Cardiac septum (tissue), 1 donor: ENCODE measurements at regions of chr6 and their contacts with region 1.

Region 1: DNA sequence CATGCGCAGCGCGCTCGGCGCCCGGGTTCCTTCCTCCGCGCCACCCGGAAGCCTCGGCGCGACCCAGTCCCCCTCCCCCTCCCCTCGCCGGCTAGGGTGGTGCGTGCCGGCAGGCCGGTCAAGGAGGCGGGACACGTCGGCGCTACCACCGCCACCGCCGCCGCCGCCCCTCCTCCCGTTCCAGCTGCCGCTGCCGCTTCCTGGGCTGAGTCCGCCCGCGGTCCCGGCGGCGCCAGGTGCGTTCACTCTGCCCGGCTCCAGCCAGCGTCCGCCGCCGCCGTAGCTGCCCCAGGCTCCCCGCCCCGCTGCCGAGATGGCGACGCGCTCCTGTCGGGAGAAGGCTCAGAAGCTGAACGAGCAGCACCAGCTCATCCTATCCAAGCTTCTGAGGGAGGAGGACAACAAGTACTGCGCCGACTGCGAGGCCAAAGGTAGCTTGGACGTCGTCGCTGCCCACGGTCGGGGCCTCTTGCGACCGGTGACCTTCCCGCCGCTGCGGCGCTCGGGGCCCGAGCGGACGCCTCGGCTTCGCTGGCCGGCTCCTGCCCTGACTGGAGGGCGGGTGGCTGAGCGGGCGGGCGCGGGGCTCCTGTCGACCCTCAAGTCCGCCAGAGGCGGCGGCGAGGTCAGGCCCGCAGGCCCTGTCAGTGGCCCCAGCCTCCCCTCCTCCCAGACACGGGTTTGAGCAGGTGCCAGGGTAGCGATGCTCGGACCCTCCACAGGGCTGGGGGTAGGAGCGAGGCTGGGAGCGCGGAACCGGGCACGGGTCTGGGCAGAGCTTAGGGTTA is at the start of gene SMAP1:
- DNase-seq: peak; percentile 97
- total RNA-seq, gene SMAP1: 32.5 TPM

Region 2: DNA sequence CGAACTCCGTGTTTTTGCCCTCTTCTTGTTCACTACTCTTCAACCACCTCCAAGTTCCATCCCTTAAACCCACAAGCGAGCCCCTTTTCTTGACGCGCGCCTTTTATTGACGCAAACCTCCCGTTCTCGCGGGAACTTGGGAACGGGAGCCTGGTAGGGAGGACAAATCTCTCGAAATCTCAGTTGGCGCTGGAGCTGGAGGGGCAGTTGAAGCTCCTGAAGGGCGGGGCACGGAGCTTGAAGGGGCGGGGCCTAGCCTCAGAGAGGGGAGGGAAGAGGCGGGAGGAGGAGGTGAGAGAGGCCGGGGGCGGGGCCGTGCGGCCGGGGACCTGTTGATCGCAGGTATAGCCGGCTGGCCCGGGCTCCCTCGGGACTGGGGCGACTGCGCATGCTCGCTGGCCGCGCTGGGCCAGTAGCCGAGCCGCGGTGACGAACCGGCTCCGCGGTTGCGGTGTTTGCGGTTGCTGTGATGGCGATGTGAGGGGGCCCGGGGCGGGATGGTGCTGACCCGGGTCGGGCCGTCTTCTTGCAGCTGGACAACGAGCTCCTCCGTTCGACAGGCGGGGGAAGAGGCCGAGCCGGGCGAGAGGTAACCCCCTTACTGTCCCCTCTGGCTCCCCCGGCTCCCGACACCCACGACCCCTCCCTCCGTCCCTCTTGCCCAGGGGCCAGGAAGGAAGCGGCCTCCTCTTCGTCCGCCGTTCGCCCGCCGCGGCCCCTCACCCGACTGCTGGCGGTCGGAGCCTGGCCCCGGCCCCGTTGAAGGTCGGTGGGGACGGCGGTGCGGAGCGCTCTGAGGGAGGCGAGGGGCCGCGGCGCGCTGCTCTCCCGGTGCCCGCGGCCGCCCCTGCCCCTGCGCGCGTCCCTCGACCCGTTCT is 254.6 kb before region 1 on chr6 and contains the start of gene FAM135A:
- intact Hi-C with region 1: loop called (anchors 5 kb)
- DNase-seq: peak; percentile 97
- total RNA-seq, gene FAM135A: 14.2 TPM

Region 3: GRCh38 chr6:70566751-70567382 is 101.0 kb before region 1 on chr6 and contains the start of gene SDHAF4:
- intact Hi-C with region 1: loop called (anchors 5 kb)
- DNase-seq: peak; percentile 97
- total RNA-seq, gene SDHAF4: 14.7 TPM

Region 4: DNA sequence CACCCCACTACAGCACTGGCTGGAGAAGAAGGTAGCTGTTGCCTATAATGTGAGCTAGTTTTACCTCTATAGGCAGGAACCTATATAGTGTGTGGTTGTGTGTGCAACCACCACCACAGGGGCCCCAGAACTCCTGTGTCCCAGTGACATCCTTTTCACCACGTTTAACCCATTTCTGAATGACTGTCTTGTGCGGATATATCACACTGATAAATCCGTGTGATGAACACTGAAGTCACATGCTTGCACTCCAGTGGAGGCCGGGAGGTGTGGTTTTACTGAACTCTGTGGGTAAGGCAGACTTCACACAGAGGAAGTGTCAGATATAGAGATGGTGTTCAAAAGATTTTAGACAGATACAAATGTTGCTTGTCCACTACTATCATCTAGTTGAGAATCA is 68.7 kb before region 1 on chr6:
- intact Hi-C with region 1: no loop called
- DNase-seq: no peak

Region 5: GRCh38 chr6:70738028-70738427 is 70.1 kb after region 1 on chr6:
- intact Hi-C with region 1: no loop called
- DNase-seq: no peak